ENCODE measurements at regions of chr12 and their contacts with region 1.

Region 1: DNA sequence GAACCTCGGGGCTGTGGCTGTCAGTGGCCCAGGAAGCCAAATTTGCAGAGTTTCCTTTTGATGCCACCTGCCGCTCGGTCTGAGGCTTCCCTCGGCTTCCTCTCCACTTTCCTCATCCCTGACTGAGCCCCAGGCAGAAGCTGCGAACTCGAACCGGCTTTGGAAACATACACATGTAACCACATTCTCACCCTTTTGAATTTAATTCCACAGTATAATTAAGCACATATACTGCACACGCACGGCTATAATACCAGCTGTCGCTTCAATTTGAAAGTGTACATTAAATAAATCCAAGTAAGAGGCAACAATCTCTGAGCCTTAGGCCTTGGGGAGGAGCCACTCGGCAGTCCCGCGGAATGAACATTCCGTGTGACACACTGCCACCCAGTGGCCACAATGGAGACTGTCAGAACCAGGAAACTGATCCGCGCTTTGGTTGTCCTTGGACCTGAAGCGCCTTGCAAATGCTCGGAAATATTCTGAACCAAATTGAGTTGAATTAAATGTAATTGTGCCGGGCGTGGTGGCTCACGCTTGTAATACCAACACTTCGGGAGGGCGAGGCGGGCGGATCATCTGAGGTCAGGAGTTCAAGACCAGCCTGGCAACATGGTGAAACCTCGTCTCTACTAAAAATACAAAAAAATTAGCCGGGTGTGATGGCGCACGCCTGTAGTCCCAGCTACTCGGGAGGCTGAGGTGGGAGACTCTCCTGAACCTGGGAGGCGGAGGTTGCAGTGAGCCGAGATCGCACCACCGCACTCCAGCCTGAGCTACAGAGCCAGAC is 117.9 kb upstream of the TMPO start:
- DNase-seq: peak; percentile 89
- H3K4me3 Mint-ChIP-seq: peak overlapping the region; percentile 73
- H3K27ac Mint-ChIP-seq: peak overlapping the region; percentile 4
- H3K4me1 Mint-ChIP-seq: peaks cover 30% of the 10 kb centered on the region
- H3K27me3 Mint-ChIP-seq: peaks cover 2% of the 10 kb centered on the region

Region 2: DNA sequence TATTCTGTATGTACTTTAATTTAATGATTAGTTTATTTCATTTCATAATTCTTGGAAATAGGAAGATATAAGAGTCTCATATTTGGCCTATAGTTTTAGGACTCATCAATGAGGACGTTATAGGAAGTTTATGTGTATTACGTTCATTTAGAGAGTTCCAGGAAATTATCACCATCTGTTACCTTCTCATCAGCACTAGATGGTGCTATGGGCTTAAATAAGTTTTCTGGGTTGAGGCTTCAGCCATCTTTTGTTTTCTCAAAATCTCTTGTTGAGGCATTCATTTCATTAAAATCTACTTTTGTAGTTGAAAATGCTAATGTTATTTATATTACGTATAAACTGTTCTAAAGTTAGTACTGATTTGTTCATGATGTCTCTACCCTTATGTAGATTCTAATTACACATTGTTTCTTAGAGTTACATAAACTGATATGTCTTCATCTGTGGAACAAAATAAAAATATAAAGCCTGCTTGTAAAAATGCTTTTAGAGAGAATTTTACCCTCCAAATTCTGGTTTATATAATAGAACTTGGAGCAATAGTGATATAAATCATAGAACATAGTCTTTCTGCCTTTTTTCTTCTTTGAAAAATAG is 1818.9 kb before region 1 on chr12:
- CTCF ChIA-PET with region 1: no interaction called
- intact Hi-C with region 1: loop called (anchors 1 kb)
- DNase-seq: no peak
- H3K4me3 Mint-ChIP-seq: no peak overlapping the region
- H3K27ac Mint-ChIP-seq: no peak overlapping the region
- H3K4me1 Mint-ChIP-seq: peaks cover 9% of the 10 kb centered on the region
- H3K27me3 Mint-ChIP-seq: peaks cover 5% of the 10 kb centered on the region

Region 3: DNA sequence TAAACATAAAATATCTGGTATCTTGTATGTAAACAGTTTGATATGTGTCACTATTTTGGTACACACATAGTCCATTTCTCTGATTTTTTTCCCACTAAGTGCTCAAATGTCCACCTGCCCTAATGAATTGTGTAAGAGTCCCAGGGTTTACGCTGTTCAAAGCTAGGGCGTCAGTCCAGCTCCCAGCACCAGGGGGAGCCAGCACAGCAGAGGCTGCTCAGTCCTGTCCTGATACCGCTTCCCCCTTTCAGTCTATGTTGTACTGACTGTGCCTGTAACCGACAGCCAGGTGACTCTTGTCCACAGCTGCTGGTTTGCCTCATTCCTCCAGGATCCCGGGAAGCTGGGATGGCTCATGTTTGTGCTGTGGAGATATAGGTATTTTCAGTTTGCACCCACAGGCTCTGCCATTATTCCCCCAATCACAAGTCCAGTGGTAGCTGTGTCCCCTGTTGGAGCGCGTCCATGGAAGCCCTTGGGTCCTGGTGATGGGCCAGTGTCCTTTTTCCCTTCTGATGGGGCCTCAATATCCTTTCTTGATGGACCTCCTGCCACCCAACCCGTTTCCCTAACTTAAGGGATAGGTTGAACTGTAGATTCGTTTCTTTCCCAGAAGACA is 1248.5 kb before region 1 on chr12:
- CTCF ChIA-PET with region 1: no interaction called
- intact Hi-C with region 1: loop called (anchors 1 kb)
- DNase-seq: peak; percentile 62
- H3K4me3 Mint-ChIP-seq: no peak overlapping the region
- H3K27ac Mint-ChIP-seq: no peak overlapping the region
- H3K4me1 Mint-ChIP-seq: no peaks in the 10 kb centered on the region
- H3K27me3 Mint-ChIP-seq: peaks cover 10% of the 10 kb centered on the region

Region 4: DNA sequence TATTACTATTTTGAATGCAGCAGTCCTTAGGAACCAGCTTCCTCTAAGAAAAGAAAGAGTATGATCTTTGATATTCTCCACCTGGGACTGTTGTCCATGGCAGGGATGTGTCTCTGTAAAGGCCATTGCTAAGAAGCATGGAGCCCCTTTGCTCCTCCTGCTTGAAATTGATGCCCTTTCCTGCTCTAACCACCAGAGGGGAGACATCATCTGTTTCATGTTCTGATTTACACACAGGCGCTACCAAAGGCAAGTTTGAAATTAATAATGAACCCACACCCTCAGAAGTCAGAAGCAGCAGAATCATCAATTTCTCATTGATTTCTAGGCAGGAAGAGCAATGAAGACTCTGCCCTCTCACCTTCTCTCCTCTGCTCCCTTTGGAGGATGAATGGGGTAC is 681.2 kb before region 1 on chr12:
- CTCF ChIA-PET with region 1: no interaction called
- intact Hi-C with region 1: loop called (anchors 5 kb)
- DNase-seq: no peak
- H3K4me3 Mint-ChIP-seq: no peak overlapping the region
- H3K27ac Mint-ChIP-seq: no peak overlapping the region
- H3K4me1 Mint-ChIP-seq: no peaks in the 10 kb centered on the region
- H3K27me3 Mint-ChIP-seq: no peaks in the 10 kb centered on the region

Region 5: DNA sequence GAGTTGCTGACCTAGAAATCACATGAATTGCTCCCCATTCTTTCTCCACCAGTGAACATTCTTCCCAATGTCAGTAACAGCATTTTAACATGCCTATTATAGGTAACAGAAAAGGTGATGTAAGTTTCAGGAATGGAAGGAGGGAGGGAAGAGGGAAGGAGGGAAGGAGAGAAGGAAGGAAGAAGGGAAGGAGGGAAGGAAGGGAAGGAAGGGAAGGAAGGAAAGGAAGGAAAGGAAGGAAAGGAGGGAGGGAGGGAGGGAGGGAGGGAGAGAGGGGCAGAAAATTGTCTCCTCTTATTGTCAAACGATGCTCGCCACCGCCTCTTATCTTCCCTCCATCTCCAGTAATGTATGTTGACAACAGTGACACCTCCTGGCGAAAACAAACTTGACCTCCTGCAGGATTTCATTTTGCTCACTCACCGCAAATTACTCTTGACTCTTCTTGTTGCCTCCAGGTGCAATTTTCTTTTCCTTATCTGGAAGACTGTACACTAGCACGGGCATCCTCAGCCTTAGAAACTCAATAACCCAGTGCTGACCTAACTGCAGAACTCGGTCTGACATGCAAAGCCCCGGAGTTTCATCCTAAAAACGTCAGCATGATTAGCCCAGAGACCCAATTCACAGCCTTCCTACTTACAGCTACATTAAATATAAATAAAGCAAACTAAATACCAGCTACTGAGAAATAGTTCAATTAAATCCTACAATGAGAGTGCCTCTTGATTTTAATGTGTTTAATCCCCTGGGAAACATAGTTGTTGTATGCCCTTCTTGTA is 394.6 kb before region 1 on chr12:
- CTCF ChIA-PET with region 1: no interaction called
- intact Hi-C with region 1: loop called (anchors 2 kb)
- DNase-seq: peak; percentile 58
- H3K4me3 Mint-ChIP-seq: no peak overlapping the region
- H3K27ac Mint-ChIP-seq: no peak overlapping the region
- H3K4me1 Mint-ChIP-seq: peaks cover 3% of the 10 kb centered on the region
- H3K27me3 Mint-ChIP-seq: peaks cover 7% of the 10 kb centered on the region

Region 6: DNA sequence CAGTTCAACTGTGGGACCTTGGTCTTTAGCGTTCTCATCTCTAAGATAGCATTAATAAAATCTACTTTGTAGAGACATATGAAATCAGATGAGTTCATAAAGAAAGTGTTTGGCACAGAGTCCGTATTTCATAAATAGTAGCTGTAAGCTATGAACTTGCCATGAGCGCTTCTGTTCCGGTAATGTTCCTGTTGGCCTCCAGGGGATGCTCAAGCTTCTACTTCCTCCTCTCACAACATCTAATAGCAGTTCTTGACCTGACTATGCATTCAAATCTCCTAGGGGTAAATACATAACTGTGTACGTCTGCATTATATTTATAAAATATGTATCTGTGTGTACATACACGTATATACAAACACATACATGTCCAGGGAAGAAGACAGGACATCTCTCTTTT is 170.3 kb before region 1 on chr12:
- CTCF ChIA-PET with region 1: interaction called, 4 read pairs
- intact Hi-C with region 1: loop called (anchors 1 kb)
- DNase-seq: no peak
- H3K4me3 Mint-ChIP-seq: no peak overlapping the region
- H3K27ac Mint-ChIP-seq: no peak overlapping the region
- H3K4me1 Mint-ChIP-seq: no peaks in the 10 kb centered on the region
- H3K27me3 Mint-ChIP-seq: peaks cover 3% of the 10 kb centered on the region

Measured in activated naive CD4-positive, alpha-beta T cell treated with anti-CD3 and anti-CD28 coated beads for 36 hours (primary cell).